MCF 10A (cell line): ENCODE measurements at regions of chr6 and their contacts with region 1.

Region 1: GRCh38 chr6:157184202-157185020 is 138.9 kb downstream of the TMEM242 start:
- DNase-seq: peak; percentile 57
- H3K4me3 Mint-ChIP-seq: no peak overlapping the region
- H3K27ac Mint-ChIP-seq: no peak overlapping the region
- H3K4me1 Mint-ChIP-seq: peaks cover 14% of the 10 kb centered on the region
- H3K27me3 Mint-ChIP-seq: no peaks in the 10 kb centered on the region
- CTCF ChIP-seq: peak; percentile 94

Region 2: DNA sequence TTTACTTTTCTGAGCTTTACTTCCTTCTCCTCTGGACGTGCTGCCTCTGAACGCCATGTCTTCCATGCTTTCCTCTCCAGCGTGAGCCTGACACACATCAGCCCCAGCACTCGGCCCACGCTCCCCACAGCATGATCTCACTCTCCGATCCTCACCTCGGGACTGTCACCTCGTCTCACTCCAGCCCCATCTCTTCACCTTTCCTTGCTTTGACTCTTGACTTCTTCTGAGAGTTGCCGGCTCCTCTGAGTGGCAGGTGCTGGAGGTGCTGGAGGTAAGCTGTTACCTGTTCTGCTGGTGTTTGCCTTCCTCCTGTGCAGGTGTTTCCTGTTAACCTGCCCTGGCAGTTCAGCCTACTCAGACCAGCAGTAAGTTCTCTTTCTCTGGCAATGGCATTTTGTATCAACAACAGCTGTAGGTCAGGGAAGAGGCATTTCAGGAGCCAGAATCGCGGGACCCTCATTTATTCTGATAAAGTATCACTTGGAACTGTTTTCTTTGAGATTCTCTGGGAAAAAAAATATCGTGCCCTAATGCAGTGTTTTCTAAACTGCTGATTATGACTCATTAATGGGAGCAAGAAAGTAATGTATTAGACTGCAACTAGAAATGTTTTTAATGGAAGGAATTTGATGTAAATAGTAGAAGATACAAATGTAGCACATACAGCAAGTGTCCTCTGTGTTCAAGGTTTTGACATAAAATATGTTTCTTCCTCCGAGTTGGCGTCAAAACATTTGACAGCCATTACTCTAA is 300.7 kb before region 1 on chr6:
- CTCF ChIA-PET with region 1: no interaction called
- POLR2A ChIA-PET with region 1: no interaction called
- intact Hi-C with region 1: no loop called
- DNase-seq: no peak
- H3K4me3 Mint-ChIP-seq: no peak overlapping the region
- H3K27ac Mint-ChIP-seq: no peak overlapping the region
- H3K4me1 Mint-ChIP-seq: peaks cover 39% of the 10 kb centered on the region
- H3K27me3 Mint-ChIP-seq: no peaks in the 10 kb centered on the region
- CTCF ChIP-seq: no peak

Region 3: GRCh38 chr6:156953479-156954146 is 230.8 kb before region 1 on chr6:
- CTCF ChIA-PET with region 1: no interaction called
- POLR2A ChIA-PET with region 1: no interaction called
- intact Hi-C with region 1: loop called (anchors 10 kb)
- DNase-seq: peak; percentile 90
- H3K4me3 Mint-ChIP-seq: peak overlapping the region; percentile 58
- H3K27ac Mint-ChIP-seq: peak overlapping the region; percentile 93
- H3K4me1 Mint-ChIP-seq: peaks cover 56% of the 10 kb centered on the region
- H3K27me3 Mint-ChIP-seq: no peaks in the 10 kb centered on the region
- CTCF ChIP-seq: no peak

Region 4: DNA sequence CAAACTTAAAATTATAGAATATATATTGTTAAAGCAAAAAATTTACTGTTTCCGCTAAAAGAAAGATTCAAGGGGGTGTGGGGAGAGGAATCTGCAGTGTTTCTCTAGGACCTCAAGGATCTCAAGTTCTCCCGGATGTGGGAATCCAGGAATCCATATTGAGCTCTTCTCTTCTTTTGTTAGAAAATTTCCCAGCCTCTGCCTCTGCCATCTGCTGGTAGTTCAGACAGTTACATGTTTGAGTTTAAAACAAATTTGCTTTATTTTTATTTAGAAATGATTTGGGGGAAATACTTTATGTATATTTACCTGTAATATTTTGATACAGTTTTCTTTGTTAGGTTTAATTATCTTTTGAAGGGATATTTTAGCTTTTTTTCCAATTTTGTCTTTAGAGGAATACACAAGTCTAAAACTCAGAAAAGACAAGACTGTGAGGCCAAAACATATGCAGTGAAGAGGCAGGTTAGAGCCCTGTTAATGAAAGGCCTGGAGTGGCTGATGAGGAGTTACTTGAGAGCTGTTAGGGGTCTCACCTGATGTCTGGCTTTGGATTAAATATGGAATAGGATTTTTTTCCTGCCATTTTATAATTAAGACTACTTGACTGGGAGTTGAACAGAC is 138.5 kb before region 1 on chr6:
- CTCF ChIA-PET with region 1: interaction called, 10 read pairs
- POLR2A ChIA-PET with region 1: interaction called, 3 read pairs
- intact Hi-C with region 1: no loop called
- DNase-seq: peak; percentile 63
- H3K4me3 Mint-ChIP-seq: no peak overlapping the region
- H3K27ac Mint-ChIP-seq: peak overlapping the region; percentile 35
- H3K4me1 Mint-ChIP-seq: peaks cover 10% of the 10 kb centered on the region
- H3K27me3 Mint-ChIP-seq: no peaks in the 10 kb centered on the region
- CTCF ChIP-seq: peak; percentile 60

Region 5: GRCh38 chr6:157068691-157069324 is 115.6 kb before region 1 on chr6:
- CTCF ChIA-PET with region 1: no interaction called
- POLR2A ChIA-PET with region 1: no interaction called
- intact Hi-C with region 1: no loop called
- DNase-seq: peak; percentile 41
- H3K4me3 Mint-ChIP-seq: no peak overlapping the region
- H3K27ac Mint-ChIP-seq: peak overlapping the region; percentile 49
- H3K4me1 Mint-ChIP-seq: peaks cover 11% of the 10 kb centered on the region
- H3K27me3 Mint-ChIP-seq: no peaks in the 10 kb centered on the region
- CTCF ChIP-seq: no peak

Region 6: DNA sequence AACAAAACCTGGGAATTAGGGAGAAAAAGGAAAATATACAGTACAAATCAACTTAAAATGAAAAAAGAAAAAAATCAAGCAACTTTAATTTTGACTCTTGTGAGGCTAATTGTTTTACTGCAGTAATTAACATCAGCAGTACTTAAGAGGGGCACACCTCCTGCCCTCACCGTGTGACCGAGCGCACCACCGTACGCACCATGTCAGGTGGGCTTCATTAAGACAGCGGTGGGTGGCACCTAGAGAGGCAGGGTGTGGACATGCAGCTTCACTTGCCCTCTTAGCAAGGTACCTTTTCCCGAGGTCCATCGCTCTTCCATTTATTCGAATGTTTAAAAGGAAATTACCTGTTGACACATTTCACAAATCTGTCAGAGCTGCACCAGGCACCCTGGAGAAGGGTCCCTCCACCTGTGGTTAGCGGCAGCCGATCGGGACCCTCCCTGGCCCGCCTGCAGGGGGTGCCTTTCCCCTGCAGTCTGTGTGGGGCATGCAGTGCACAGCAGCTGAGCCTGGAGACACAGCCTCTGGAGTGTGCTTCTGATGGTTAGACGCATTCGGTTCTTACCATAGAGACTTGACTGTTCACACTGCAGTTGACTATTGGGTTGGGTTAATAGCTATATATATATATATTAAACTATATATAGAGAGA is 45.2 kb before region 1 on chr6:
- CTCF ChIA-PET with region 1: no interaction called
- POLR2A ChIA-PET with region 1: no interaction called
- intact Hi-C with region 1: no loop called
- DNase-seq: peak; percentile 9
- H3K4me3 Mint-ChIP-seq: no peak overlapping the region
- H3K27ac Mint-ChIP-seq: no peak overlapping the region
- H3K4me1 Mint-ChIP-seq: peaks cover 7% of the 10 kb centered on the region
- H3K27me3 Mint-ChIP-seq: no peaks in the 10 kb centered on the region
- CTCF ChIP-seq: no peak

Region 7: DNA sequence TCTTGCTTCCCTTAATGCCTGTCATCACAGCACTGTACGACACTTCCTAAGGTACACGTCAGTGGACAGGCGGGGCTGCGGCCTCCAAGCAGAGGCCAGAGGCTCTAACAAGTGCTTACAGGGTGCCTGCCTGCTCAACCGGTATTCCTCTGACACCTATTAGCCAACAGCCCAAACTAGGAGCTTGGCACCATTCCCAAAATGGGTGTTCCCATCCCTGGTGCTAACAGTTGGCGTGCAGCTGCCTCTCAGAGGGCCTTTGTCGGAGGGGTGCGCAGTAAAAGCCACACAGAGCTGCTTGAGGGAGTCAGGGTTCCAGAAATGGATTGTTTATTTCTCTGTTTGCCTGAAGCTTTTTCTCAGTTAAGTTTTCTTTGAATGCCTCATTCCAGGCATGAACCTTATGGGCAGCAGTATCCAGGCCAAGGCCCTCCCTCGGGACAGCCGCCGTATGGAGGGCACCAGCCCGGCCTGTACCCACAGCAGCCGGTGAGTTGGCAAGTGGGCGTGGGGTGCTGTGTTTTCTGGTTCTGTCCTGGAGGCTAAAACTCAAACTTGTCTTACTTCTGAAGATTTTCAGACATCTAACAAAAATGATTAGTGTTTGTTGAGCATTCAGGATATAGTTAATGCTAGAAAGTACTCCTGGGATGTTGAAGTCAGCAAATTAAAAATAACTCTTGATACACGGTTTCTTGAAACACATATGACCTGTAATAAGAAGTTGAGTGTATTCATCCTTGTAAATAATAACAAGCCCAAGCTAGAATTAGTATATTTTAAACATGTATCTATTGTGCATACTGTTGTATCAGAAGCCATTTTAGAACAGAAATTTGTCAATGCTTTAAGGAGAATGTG is 14.2 kb after region 1 on chr6:
- CTCF ChIA-PET with region 1: interaction called, 8 read pairs
- POLR2A ChIA-PET with region 1: interaction called, 10 read pairs
- intact Hi-C with region 1: no loop called
- DNase-seq: peak; percentile 88
- H3K4me3 Mint-ChIP-seq: peak overlapping the region; percentile 47
- H3K27ac Mint-ChIP-seq: peak overlapping the region; percentile 85
- H3K4me1 Mint-ChIP-seq: peaks cover 5% of the 10 kb centered on the region
- H3K27me3 Mint-ChIP-seq: no peaks in the 10 kb centered on the region
- CTCF ChIP-seq: no peak

Region 8: GRCh38 chr6:157323255-157323965 is 139.0 kb after region 1 on chr6 and contains the start of gene TMEM242:
- CTCF ChIA-PET with region 1: no interaction called
- POLR2A ChIA-PET with region 1: no interaction called
- intact Hi-C with region 1: no loop called
- DNase-seq: peak; percentile 93
- H3K4me3 Mint-ChIP-seq: peak within 1 kb of the TSS; percentile 81
- H3K27ac Mint-ChIP-seq: peak within 1 kb of the TSS; percentile 87
- H3K4me1 Mint-ChIP-seq: no peaks in the 10 kb centered on the region
- H3K27me3 Mint-ChIP-seq: no peaks in the 10 kb centered on the region
- CTCF ChIP-seq: no peak
- total RNA-seq, gene TMEM242: 9.4 and 10.1 TPM in 2 replicates